AG04449 (cell line): ENCODE measurements at regions of chr16 and their contacts with region 1.

Region 1: DNA sequence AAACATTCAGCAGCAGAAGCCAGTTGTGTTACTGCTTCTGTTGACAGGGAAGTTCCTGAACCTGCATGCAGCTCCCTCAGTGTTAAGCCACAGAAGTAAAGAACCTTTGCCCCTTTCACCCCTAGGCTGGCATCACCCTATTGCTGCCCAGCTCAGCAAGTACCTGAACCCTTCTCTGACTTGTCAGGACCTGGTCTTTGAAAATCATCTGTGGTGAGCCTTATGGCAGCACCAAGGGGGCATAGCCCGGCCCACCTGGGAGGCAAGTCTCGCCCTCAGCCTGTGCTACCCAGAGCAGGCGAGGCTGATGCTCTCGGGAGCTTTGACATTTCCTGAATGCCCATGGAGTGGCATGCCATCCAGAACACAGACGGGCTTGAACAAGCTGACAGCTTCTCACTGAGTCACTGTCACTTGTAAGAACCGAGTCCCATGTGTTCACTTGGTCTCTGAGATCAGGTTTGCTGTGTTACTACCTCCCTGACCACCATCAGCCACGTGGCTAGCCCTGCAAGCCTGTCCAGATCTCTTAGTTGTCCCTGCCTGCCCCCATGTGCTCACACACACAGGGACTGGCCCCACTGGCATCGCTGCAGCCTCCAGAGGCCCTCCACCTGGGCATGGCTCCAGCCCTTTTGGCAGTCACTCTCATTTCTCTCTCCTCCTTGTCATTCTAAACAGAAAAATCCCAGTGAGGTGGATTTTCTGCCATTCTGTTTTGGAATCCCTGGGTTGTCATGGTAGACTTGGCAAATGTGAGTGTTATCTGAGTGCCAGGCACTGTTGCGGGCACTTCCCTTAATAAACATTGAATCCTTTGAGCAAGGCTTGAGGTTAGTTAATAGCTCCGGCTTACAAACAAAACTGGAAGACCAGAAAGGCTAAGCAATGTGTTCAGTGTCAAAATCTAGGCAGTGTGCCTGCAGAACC is 2.9 kb upstream of the CARMIL2 start:
- DNase-seq: no peak
- H3K4me3 ChIP-seq: no peak overlapping the region
- CTCF ChIP-seq: no peak

Region 2: DNA sequence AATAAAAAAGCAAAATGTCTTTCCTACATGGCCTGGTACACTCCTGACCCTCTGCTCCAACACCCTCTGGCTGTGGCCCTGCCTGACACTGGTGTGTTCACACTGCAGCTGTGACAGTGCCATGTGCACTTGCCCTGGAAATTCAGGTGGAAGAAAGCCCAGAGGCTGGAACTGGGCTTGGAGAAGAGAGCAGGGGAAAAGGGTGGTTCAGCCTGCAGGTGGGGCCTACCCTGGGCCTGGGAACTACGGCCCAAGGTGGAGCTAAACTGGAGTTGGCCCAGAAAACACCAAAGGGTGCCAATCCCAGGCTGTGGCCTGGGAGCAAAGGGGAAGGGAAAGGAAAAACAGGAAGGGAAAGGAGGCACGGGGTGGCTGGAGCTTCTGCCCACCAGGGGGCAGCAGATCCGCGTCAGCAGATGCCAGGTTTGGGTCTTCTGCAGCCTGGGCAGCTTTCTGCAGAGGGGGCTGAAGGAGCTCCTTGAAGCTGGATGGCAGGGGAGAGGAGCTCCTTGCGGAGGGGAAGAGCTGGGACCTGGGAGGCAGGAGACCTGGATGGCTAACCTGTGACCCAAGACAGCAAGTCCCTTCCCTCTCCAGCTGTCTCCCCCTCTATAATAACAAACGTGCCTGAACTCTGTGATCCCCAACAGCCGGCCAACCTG is 95.2 kb before region 1 on chr16:
- CTCF ChIA-PET with region 1: interaction called, 148 read pairs
- POLR2A ChIA-PET with region 1: no interaction called
- DNase-seq: no peak
- H3K4me3 ChIP-seq: no peak overlapping the region
- CTCF ChIP-seq: peak; percentile 93

Region 3: DNA sequence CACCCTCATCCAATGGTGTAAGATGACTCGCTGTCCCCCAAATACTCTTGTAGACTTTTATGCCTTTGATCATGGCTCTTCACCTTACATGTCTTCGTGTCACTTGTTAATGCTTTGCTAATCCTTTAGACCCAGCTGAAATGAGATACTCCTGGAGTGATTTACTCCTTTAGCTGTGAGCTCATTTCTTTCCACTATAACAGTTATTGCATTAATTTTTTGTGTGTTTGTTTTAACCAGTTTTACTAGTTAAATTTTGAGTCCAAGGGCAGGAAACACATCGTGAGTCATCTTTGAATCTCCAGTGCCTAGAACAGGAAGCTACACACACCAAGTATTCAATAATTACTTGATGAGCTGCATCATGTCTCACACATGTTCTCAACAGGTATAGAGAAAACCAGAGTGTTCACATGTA is 86.2 kb before region 1 on chr16:
- CTCF ChIA-PET with region 1: interaction called, 148 read pairs
- POLR2A ChIA-PET with region 1: no interaction called
- DNase-seq: no peak
- H3K4me3 ChIP-seq: no peak overlapping the region
- CTCF ChIP-seq: no peak

Region 4: GRCh38 chr16:67613808-67614207 is 28.2 kb before region 1 on chr16:
- CTCF ChIA-PET with region 1: interaction called, 14 read pairs
- POLR2A ChIA-PET with region 1: no interaction called
- DNase-seq: no peak
- H3K4me3 ChIP-seq: no peak overlapping the region
- CTCF ChIP-seq: no peak

Region 5: GRCh38 chr16:67660564-67661028 is 18.6 kb after region 1 on chr16 and contains the start of gene PARD6A:
- CTCF ChIA-PET with region 1: interaction called, 39 read pairs
- POLR2A ChIA-PET with region 1: no interaction called
- DNase-seq: peak; percentile 53
- H3K4me3 ChIP-seq: peak within 1 kb of the TSS; percentile 94
- CTCF ChIP-seq: no peak